GM10248 (cell line): ENCODE measurements at regions of chr3 and their contacts with region 1.

Region 1: GRCh38 chr3:55180936-55181535 is 253.2 kb upstream of the LRTM1 start:
- DNase-seq: peak; percentile 51
- CTCF ChIP-seq: peak; percentile 50

Region 2: DNA sequence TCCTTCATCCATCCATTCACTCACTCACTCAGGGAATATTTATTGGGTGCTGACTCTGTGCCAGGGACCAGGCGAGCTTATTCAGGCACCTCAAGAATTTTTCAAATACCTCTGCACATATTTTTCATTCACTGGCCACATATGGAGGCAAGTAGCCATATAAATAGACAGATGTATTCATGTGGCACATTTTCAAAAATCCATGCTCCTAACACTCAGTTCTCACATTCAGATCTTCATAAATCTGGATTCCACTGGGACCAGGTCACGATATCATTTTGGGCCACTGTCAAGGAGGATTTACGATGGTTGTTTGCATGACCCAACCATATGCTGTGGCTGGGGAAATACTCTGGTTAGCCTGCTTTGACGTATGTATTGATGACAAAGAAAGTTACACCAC is 11.4 kb before region 1 on chr3:
- CTCF ChIA-PET with region 1: interaction called, 12 read pairs
- POLR2A ChIA-PET with region 1: no interaction called
- DNase-seq: no peak
- CTCF ChIP-seq: no peak